SK-N-SH (cell line): ENCODE measurements at regions of chr3 and their contacts with region 1.

Region 1: DNA sequence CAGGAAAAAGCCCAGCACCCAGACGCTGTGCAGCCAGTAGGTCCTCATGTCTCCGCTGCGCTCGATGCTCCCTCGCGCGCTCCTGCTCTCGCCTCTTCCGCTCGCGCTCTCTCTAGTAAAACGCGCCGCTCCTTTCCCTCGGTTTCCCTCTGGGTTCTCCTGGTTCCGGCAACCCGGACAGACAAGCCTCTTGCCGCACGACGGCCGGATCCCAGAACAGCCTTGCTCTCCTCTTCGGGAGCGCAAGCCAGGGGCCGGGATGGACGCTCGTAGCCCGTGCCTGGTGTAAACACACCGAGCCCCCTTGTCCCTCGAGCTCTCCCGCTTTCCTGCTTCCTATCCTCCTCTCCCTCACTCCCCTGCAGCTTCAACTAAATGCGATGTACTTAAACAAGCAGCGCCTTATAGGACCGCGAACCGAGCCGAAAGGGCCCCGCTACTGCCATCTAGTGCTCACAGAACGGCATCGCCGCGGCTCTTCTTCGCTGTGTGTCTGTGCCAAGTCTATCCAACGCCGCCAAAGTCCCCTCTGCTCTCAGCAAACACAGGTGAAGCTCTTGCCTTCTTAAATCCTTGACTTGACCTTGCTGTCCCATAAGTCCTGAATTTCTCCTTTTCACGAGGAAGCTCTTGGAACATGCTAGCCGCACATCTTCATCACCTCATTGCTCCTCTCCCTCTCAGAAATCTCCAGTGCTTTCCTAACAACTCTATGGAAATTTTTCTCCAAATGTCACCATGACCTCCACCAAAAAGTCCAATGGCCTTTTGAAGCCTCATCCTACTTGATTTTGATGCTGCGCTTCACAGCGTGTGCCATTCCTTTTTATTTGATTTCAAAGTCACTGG is 1037.2 kb downstream of the IGSF11 start:
- DNase-seq: peak; percentile 76
- H3K4me3 ChIP-seq: peak overlapping the region; percentile 75 to 85
- H3K27ac ChIP-seq: peak overlapping the region in 1 of 2 experiments; percentile 95; a peak in 2 of 4 replicates
- H3K4me1 ChIP-seq: peaks cover 0 to 7% of the 10 kb centered on the region in 2 experiments; a peak in 2 of 4 replicates
- H3K27me3 ChIP-seq: no peaks in the 10 kb centered on the region
- CTCF ChIP-seq: peak; percentile 92
- EP300 ChIP-seq: no peak
- RAD21 ChIP-seq: peak; percentile 90

Region 2: GRCh38 chr3:117722856-117723255 is 274.6 kb before region 1 on chr3:
- CTCF ChIA-PET with region 1: interaction called, 10 read pairs
- POLR2A ChIA-PET with region 1: no interaction called
- DNase-seq: no peak
- H3K4me3 ChIP-seq: no peak overlapping the region
- H3K27ac ChIP-seq: no peak overlapping the region
- H3K4me1 ChIP-seq: peaks cover 0 to 2% of the 10 kb centered on the region in 2 experiments; a peak in 1 of 4 replicates
- H3K27me3 ChIP-seq: no peaks in the 10 kb centered on the region
- CTCF ChIP-seq: no peak
- EP300 ChIP-seq: no peak
- RAD21 ChIP-seq: no peak

Region 3: DNA sequence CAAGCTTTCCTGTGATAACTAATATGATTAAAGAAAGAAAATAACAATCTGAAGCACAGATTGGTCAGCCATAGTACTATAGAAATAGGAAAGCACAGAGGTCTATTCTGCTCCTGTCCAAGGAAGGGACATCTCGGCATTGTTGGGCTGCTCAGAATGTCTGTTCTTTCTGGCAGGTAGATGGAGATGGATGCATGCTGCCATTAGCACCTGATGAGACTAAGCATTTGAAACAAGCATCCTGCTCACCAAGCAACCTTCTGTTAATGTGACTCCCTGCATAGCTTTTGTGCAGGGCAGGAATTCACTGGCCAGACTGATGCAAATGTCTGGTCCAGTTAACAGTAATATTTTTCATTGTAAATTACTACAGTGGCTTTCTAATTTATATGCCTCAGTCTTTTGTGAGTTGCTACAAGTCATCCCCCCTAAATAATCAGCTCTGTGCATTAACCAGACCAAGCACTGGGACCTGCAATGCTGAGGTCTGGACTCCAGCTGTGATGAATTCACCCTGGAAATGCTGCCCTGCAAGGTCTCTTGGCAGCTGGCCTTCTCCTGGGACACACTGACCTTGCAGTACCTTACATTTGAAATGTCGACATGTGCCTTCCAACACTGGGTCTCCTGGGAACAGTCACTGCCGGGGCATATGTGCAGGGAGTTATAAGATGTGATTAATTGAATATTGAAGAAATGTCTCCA is 86.5 kb before region 1 on chr3:
- CTCF ChIA-PET with region 1: interaction called, 13 read pairs
- POLR2A ChIA-PET with region 1: interaction called, 13 read pairs
- DNase-seq: peak; percentile 75
- H3K4me3 ChIP-seq: no peak overlapping the region; a peak in 1 of 4 replicates
- H3K27ac ChIP-seq: peak overlapping the region in 1 of 2 experiments; percentile 99; a peak in 2 of 4 replicates
- H3K4me1 ChIP-seq: peaks cover 0 to 33% of the 10 kb centered on the region in 2 experiments; a peak in 2 of 4 replicates
- H3K27me3 ChIP-seq: no peaks in the 10 kb centered on the region
- CTCF ChIP-seq: no peak
- EP300 ChIP-seq: peak in 1 of 2 experiments; percentile 99; a peak in 2 of 4 replicates
- RAD21 ChIP-seq: no peak; the same call in none of the 2 replicates

Region 4: GRCh38 chr3:117927825-117928224 is 69.6 kb before region 1 on chr3:
- CTCF ChIA-PET with region 1: interaction called, 21 read pairs
- POLR2A ChIA-PET with region 1: interaction called, 4 read pairs
- DNase-seq: no peak
- H3K4me3 ChIP-seq: no peak overlapping the region
- H3K27ac ChIP-seq: peak overlapping the region in 1 of 2 experiments; percentile 89; a peak in 2 of 4 replicates
- H3K4me1 ChIP-seq: peaks cover 0 to 27% of the 10 kb centered on the region in 2 experiments; a peak in 3 of 4 replicates
- H3K27me3 ChIP-seq: no peaks in the 10 kb centered on the region
- CTCF ChIP-seq: no peak
- EP300 ChIP-seq: no peak
- RAD21 ChIP-seq: no peak

Region 5: DNA sequence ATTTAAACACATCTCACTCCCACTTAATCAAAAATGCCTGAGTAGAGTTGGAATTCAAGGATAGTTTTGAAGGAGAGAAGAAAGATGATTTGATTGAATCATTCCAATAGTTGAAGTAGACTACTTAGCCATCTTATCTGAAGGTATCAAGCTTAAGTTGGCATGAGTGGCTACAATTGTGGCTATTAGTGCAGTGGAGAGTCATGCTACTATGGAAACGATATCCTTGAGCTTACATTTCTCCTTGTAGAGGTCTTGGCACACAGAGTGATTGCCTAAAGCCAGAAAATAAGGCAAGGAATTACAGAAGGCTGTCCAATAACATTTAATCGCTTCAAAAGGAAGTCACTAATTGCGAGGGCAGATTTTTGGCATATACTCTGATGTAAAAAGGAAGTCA is 14.5 kb after region 1 on chr3:
- CTCF ChIA-PET with region 1: interaction called, 11 read pairs
- POLR2A ChIA-PET with region 1: no interaction called
- DNase-seq: no peak
- H3K4me3 ChIP-seq: no peak overlapping the region
- H3K27ac ChIP-seq: no peak overlapping the region
- H3K4me1 ChIP-seq: no peaks in the 10 kb centered on the region
- H3K27me3 ChIP-seq: no peaks in the 10 kb centered on the region
- CTCF ChIP-seq: no peak
- EP300 ChIP-seq: no peak
- RAD21 ChIP-seq: no peak